ENCODE measurements at regions of chr17 and their contacts with region 1.

Region 1: GRCh38 chr17:38351412-38352222 is at the start of gene SOCS7:
- DNase-seq: peak; percentile 92 to 96 (median 96)
- ATAC-seq: peak; percentile 89
- H3K4me3 ChIP-seq: peak within 1 kb of the TSS; percentile 73
- H3K27ac ChIP-seq: peak within 1 kb of the TSS; percentile 84
- H3K4me1 ChIP-seq: peaks cover 22 to 23% of the 10 kb centered on the region in 2 experiments; a peak in 4 of 5 replicates
- H3K27me3 ChIP-seq: no peaks in the 10 kb centered on the region
- CTCF ChIP-seq: no peak; a peak in 1 of 6 replicates
- EP300 ChIP-seq: no peak
- POLR2A ChIP-seq: peak; percentile 93
- RAD21 ChIP-seq: no peak
- polyA plus RNA-seq, gene SOCS7: 0.94 to 1.3 TPM

Region 2: GRCh38 chr17:37888881-37889280 is 462.7 kb before region 1 on chr17:
- CTCF ChIA-PET with region 1: no interaction called
- POLR2A ChIA-PET with region 1: no interaction called
- in situ Hi-C with region 1: no loop called
- intact Hi-C with region 1: no loop called
- DNase-seq: no peak
- ATAC-seq: no peak
- H3K4me3 ChIP-seq: no peak overlapping the region
- H3K27ac ChIP-seq: no peak overlapping the region
- H3K4me1 ChIP-seq: no peaks in the 10 kb centered on the region; a peak in 1 of 5 replicates
- H3K27me3 ChIP-seq: no peaks in the 10 kb centered on the region
- CTCF ChIP-seq: no peak
- EP300 ChIP-seq: no peak
- POLR2A ChIP-seq: no peak
- RAD21 ChIP-seq: no peak

Region 3: GRCh38 chr17:38361694-38362465 is 10.3 kb after region 1 on chr17:
- CTCF ChIA-PET with region 1: no interaction called
- POLR2A ChIA-PET with region 1: interaction called, 34 read pairs
- in situ Hi-C with region 1: no loop called
- intact Hi-C with region 1: no loop called
- DNase-seq: no peak
- ATAC-seq: no peak
- H3K4me3 ChIP-seq: no peak overlapping the region
- H3K27ac ChIP-seq: no peak overlapping the region
- H3K4me1 ChIP-seq: no peaks in the 10 kb centered on the region
- H3K27me3 ChIP-seq: no peaks in the 10 kb centered on the region
- CTCF ChIP-seq: no peak
- EP300 ChIP-seq: no peak
- POLR2A ChIP-seq: no peak
- RAD21 ChIP-seq: no peak

Region 4: GRCh38 chr17:38410201-38410600 is 58.6 kb after region 1 on chr17:
- CTCF ChIA-PET with region 1: interaction called, 42 read pairs
- POLR2A ChIA-PET with region 1: interaction called, 8 read pairs
- in situ Hi-C with region 1: loop called (anchors 5 kb)
- intact Hi-C with region 1: loop called (anchors 1 kb)
- DNase-seq: no peak
- ATAC-seq: no peak
- H3K4me3 ChIP-seq: no peak overlapping the region
- H3K27ac ChIP-seq: no peak overlapping the region
- H3K4me1 ChIP-seq: peaks cover 4 to 6% of the 10 kb centered on the region in 2 experiments
- H3K27me3 ChIP-seq: peaks cover 9 to 24% of the 10 kb centered on the region in 2 experiments; a peak in 4 of 5 replicates
- CTCF ChIP-seq: no peak
- EP300 ChIP-seq: no peak
- POLR2A ChIP-seq: no peak
- RAD21 ChIP-seq: no peak

Region 5: DNA sequence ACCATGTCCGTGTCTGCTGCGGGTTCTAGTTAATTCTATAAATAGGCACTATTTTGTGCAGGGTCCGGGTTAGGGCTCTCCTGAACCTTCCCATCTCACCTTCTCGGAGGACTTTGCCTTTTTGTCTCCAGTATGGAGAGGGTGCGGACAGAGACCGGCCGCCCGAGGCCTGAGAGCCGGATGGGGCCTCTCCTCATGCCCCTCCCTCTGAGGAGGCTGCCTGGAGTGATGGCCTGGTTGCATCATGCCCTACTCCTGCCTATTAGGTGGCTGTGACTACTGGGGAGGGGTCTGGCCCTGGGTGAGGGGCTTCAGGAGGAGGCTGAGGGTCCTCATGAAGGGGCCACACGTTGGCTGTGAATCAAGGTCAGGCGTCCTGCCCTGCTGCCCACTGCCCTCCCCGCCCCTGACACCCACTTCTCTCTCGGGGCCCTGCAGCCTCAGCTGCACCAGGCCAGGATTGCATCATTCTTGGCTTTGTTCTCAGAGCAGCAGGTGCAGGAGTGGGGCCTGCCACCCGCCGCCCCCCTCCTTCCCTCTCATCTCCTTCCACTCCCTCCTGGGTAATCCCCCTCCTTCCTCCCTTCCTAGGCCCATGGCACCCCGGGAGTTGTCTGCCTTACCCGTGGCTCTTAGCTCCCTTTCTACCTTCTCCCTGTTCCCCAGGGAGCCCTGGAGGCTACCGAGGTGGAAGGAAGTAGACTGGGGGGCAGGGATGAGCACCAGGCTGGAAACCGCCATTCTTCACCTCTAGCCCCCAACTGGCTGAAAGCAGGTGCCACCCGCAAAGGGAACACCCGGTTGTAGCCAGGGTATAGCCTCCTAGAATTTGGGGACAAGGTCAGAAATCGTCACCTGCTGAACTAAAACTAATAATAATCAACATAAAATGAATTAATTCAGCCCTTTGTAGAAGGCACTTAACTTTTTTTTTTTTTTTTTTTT is 63.9 kb after region 1 on chr17:
- CTCF ChIA-PET with region 1: interaction called, 42 read pairs
- POLR2A ChIA-PET with region 1: interaction called, 8 read pairs
- in situ Hi-C with region 1: loop called (anchors 5 kb)
- intact Hi-C with region 1: loop called (anchors 1 kb)
- DNase-seq: peak in 1 of 4 experiments; percentile 37
- ATAC-seq: peak; percentile 87
- H3K4me3 ChIP-seq: no peak overlapping the region
- H3K27ac ChIP-seq: no peak overlapping the region; the same call in 2 of the 3 replicates
- H3K4me1 ChIP-seq: peaks cover 30 to 41% of the 10 kb centered on the region in 2 experiments
- H3K27me3 ChIP-seq: peaks cover 11 to 34% of the 10 kb centered on the region in 2 experiments; a peak in 4 of 5 replicates
- CTCF ChIP-seq: no peak
- EP300 ChIP-seq: peak; percentile 43; the same call in 1 of the 2 replicates
- POLR2A ChIP-seq: no peak
- RAD21 ChIP-seq: no peak; a peak in 1 of 4 replicates

Region 6: DNA sequence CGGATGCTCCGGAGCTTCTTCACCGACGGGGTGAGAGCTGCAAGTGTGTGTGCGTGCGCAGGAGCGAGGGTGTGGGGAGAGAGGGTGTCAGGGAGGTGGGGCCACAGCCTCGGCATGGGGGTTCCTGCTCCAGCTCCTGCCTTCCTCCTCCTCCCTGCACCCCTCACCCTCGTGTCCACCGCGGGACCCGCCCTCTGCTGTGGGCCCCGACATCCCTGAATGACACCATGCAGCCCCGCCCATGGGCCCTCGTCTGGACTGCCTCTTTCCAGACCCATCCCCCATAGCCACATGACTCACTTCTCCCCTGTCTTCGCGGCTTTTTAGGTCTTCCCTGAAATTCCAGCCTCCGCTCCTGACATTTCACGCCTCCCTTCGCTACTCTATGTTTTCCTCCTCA is 118.3 kb after region 1 on chr17:
- CTCF ChIA-PET with region 1: no interaction called
- POLR2A ChIA-PET with region 1: no interaction called
- in situ Hi-C with region 1: loop called (anchors 10 kb)
- intact Hi-C with region 1: no loop called
- DNase-seq: peak; percentile 26 to 63 (median 51)
- ATAC-seq: no peak
- H3K4me3 ChIP-seq: no peak overlapping the region
- H3K27ac ChIP-seq: no peak overlapping the region
- H3K4me1 ChIP-seq: peaks cover 5 to 37% of the 10 kb centered on the region in 2 experiments; a peak in 4 of 5 replicates
- H3K27me3 ChIP-seq: peaks cover 0 to 19% of the 10 kb centered on the region in 2 experiments; a peak in 2 of 5 replicates
- CTCF ChIP-seq: no peak
- EP300 ChIP-seq: no peak
- POLR2A ChIP-seq: no peak
- RAD21 ChIP-seq: no peak

Region 7: DNA sequence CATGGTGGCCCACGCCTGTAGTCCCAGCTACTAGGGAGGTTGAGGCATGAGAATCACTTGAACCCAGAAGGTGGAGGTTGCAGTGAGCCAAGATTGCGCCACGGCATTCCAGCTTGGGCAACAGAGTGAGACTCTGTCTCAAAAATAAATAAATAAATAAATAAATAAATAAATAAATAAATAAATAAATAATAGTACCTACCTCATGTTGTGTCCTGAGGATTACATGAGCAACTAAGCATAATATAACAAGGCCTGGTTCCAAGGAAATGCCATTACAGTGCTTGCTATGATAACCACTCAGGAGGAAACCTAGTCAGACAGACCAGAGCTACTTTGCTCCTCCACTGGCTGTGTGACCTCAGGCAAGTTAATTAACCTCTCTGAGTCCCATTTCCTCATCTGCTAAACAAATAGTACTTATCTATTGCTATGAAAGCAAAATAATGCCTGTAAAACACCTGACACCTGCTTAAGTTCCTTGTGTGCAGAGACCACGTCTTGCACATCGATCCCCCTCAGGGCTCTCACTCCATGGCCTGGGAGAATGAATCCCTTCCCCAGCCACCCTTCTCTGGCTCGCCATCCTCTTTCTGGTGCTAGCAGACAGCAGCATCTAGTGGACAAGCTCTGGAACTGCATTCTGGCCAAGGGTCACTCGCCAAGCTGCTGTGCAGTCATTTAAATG is 315.6 kb after region 1 on chr17:
- CTCF ChIA-PET with region 1: no interaction called
- POLR2A ChIA-PET with region 1: no interaction called
- in situ Hi-C with region 1: no loop called
- intact Hi-C with region 1: loop called (anchors 5 kb)
- DNase-seq: peak; percentile 77 to 82 (median 78)
- ATAC-seq: peak; percentile 82
- H3K4me3 ChIP-seq: no peak overlapping the region
- H3K27ac ChIP-seq: no peak overlapping the region
- H3K4me1 ChIP-seq: peaks cover 0 to 7% of the 10 kb centered on the region in 2 experiments; a peak in 3 of 5 replicates
- H3K27me3 ChIP-seq: peaks cover 9 to 18% of the 10 kb centered on the region in 2 experiments; a peak in 4 of 5 replicates
- CTCF ChIP-seq: peak; percentile 96 to 100 (median 99)
- EP300 ChIP-seq: no peak
- POLR2A ChIP-seq: no peak
- RAD21 ChIP-seq: peak; percentile 90 to 95